BJ (cell line): ENCODE measurements at regions of chr19 and their contacts with region 1.

Region 1: GRCh38 chr19:7215176-7215575 is 79.0 kb downstream of the INSR start:
- DNase-seq: no peak
- H3K4me3 ChIP-seq: no peak overlapping the region
- H3K27me3 ChIP-seq: no peaks in the 10 kb centered on the region
- CTCF ChIP-seq: no peak

Region 2: DNA sequence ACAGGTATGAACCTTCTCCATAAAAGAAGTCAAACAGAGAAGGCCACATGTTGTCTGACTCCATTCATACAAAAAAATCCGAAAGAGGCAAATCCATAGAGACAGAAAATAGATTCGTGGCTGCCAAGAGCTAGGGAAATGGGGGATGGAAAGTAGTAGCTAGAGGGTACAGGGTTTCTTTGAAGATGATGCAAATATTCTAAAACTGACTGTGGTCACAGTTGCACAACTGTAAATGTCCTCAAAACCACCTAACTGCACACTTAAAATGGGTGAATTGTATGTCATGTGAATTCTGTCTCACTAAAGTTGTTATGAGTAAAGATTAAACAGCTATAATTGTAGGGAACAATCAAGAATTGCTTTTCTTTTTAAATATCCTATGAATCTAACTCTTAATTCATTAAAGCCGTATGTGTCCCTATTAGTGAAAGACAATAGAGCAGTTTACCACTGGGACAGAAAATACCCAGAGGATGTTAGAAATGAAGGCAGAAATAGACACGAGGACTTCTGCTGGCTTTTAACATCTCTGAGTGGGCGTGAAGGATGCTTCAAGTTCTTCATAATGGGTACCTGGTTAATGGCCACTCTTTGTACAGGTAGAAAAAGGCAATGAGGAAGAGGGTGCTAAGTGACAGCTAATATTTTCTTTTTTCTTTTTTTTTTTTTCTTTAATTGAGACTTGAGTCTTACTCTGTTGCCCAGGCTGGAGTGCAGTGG is 57.8 kb after region 1 on chr19:
- CTCF ChIA-PET with region 1: no interaction called
- POLR2A ChIA-PET with region 1: interaction called, 20 read pairs
- DNase-seq: no peak
- H3K4me3 ChIP-seq: no peak overlapping the region
- H3K27me3 ChIP-seq: no peaks in the 10 kb centered on the region
- CTCF ChIP-seq: no peak

Region 3: DNA sequence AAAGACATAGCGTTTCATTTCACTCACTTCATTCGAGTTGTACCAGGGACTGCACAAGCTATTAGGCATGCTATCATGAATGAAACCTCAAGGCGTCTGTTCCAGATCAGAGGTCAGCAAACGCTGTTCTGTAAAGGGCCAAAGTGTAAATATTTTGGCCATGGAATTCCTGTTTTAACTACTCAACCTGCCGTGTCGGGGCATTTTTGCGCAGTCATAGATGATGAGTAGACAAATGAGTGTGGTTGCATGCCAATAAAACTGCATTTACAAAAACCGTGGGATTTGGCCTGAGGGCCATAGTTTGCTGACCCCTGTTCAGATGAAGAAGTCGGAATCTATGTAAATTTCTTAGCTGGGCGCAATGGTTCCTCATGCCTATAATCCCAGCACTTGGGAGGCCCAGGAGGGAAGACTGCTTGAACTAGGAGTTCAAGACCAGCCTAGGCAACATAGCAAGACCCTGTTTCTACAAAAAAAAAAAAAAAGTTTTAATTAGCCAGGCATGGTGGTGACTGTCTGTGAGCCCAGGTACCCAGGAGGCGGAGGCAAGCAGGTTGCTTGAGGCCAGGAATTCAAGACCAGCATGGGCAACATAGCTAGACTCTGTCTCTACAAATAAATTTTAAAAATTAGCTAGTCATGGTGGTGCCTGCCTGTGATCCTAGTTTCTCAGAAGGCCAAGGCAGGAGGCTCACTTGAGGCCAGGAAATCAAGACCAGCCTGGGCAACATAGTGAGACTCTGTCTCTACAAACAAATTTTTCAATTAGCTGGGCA is 72.7 kb after region 1 on chr19:
- CTCF ChIA-PET with region 1: no interaction called
- POLR2A ChIA-PET with region 1: interaction called, 14 read pairs
- DNase-seq: no peak
- H3K4me3 ChIP-seq: no peak overlapping the region
- H3K27me3 ChIP-seq: no peaks in the 10 kb centered on the region
- CTCF ChIP-seq: no peak